Common myeloid progenitor, CD34-positive (primary cell): ENCODE measurements at regions of chr19 and their contacts with region 1.

Region 1: GRCh38 chr19:18475004-18475453 is 37.1 kb upstream of the ISYNA1 start:
- DNase-seq: no peak
- H3K4me3 ChIP-seq: no peak overlapping the region
- H3K27ac ChIP-seq: no peak overlapping the region
- H3K4me1 ChIP-seq: peaks cover 0 to 41% (median 16%) of the 10 kb centered on the region in 4 experiments
- H3K27me3 ChIP-seq: no peaks in the 10 kb centered on the region

Region 2: DNA sequence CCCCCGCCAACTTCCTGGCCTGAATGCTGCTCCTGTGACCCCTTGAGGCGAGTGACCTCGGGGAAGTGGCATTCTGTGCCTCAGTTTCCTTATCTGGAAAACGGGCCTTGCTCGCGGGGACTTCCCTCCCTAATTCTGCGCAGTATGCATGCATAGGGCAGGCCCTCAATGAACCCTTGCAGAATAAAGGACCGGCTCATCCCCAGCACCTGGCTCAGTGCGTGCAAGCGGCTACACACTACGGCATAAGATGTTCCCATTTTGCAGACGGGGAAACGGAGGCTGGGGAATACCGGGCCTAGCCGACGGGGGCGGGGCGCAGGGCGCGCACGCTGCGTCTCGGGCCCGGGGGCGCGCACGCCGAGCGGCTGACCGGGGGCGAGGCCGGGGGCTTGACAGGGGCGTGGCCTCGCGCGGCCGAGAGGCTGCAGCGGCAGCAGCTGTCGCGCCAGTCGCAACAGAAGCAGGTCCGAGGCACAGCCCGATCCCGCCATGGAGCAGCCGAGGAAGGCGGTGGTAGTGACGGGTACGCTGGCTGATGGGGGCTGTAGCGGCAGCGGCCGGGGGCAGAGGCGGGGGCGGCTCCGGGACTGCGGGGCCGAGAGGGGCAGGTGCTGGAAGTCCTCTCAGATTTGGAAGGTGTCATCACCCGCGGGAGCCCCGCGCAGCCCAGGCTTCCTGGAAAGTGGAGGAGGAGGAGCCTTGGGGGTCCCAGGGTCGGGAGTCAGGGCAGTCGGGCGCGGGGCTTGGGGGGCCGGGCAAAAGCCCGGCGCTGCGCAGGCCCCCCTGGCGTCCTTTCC is 134.6 kb before region 1 on chr19 and contains the start of gene PGPEP1:
- CTCF ChIA-PET with region 1: no interaction called
- POLR2A ChIA-PET with region 1: no interaction called
- DNase-seq: peak; percentile 30 to 67 (median 62)
- H3K4me3 ChIP-seq: peak within 1 kb of the TSS; percentile 75 to 92 (median 81)
- H3K27ac ChIP-seq: peak within 1 kb of the TSS; percentile 72 to 87
- H3K4me1 ChIP-seq: peaks cover 2 to 31% (median 22%) of the 10 kb centered on the region in 4 experiments
- H3K27me3 ChIP-seq: no peaks in the 10 kb centered on the region

Region 3: DNA sequence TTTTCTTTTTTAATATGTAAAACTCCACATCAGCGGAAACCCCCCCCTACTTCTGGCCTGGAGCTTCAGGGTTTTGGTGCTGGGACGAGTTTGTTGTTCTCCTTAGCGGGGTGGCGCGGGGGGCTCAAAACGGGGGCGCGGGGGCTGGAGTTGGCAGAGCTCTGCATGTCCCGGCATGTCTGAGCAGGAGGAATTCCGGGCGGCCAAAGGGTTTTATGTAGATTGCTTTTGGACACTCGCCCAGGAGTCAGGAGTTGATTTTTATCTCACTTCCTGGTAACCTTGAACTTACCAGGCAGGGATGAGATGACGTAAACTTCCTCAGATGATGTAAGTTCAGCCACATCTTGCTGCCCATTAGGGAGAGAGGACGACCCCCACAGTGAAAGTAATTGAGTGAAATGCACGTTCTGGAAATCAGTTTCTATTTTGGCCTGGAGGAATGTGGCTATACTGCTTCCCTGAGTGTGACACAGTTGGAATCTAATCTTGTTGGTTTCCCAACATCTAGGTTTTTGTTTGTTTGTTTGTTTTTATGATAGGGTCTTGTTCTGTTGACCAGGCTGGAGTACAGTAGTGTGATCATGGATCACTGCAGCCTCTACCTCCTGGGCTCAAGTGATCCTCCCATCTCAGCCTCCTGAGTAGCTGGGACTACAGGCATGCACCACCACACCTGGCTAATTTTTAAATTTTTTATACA is 110.1 kb before region 1 on chr19:
- CTCF ChIA-PET with region 1: no interaction called
- POLR2A ChIA-PET with region 1: no interaction called
- DNase-seq: peak; percentile 82 to 87 (median 85)
- H3K4me3 ChIP-seq: peak overlapping the region in 2 of 7 experiments; percentile 20 to 25
- H3K27ac ChIP-seq: peak overlapping the region in 1 of 2 experiments; percentile 73
- H3K4me1 ChIP-seq: peaks cover 5 to 29% (median 21%) of the 10 kb centered on the region in 4 experiments
- H3K27me3 ChIP-seq: no peaks in the 10 kb centered on the region

Region 4: DNA sequence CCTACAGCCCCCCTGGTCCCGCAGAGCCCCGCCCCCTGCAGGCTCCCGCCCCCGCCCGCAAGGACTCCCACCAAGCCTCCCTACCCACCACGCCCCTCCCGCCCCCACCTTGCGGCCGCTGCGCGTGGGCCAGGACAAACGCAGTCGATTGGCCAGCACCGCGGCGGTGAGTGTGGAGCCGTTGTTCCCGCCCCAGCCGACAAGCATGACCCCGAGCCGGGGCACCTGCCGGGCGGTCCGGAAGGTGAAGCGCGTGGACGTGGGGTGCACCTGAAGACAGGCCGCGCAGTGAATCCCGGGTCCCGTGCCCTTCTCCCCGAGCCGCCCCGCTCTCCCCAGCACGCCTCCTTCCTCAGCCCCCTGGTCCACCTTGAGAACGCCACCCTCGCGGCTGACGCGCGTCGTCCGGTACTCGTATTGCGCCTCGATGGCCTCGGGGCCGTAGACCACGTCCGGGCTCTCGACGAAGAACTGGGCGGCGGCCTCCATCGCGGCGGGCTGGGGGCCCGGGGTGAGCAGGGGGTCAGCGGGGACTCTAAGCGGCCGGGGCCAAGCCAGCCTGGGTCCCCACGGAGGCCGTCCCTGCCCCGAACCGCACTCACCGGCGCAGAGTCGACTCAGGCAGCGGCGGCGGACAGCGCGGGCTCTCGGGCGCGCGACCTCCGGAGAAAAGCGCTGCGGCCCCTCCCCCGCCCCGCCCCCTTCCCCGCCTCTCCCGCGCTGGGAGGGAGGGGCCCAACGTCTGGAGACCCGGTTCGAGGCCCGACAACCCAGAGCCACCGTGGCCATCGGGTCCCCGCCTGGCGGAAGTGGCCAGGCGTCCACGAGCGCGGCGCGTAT is 37.3 kb before region 1 on chr19 and contains the start of gene ISYNA1:
- CTCF ChIA-PET with region 1: no interaction called
- POLR2A ChIA-PET with region 1: no interaction called
- DNase-seq: peak in 2 of 3 donors; percentile 40 to 58
- H3K4me3 ChIP-seq: peak within 1 kb of the TSS; percentile 29 to 80 (median 69)
- H3K27ac ChIP-seq: peak within 1 kb of the TSS in 1 of 2 experiments; percentile 68
- H3K4me1 ChIP-seq: peaks cover 0 to 42% (median 27%) of the 10 kb centered on the region in 4 experiments
- H3K27me3 ChIP-seq: no peaks in the 10 kb centered on the region

Region 5: DNA sequence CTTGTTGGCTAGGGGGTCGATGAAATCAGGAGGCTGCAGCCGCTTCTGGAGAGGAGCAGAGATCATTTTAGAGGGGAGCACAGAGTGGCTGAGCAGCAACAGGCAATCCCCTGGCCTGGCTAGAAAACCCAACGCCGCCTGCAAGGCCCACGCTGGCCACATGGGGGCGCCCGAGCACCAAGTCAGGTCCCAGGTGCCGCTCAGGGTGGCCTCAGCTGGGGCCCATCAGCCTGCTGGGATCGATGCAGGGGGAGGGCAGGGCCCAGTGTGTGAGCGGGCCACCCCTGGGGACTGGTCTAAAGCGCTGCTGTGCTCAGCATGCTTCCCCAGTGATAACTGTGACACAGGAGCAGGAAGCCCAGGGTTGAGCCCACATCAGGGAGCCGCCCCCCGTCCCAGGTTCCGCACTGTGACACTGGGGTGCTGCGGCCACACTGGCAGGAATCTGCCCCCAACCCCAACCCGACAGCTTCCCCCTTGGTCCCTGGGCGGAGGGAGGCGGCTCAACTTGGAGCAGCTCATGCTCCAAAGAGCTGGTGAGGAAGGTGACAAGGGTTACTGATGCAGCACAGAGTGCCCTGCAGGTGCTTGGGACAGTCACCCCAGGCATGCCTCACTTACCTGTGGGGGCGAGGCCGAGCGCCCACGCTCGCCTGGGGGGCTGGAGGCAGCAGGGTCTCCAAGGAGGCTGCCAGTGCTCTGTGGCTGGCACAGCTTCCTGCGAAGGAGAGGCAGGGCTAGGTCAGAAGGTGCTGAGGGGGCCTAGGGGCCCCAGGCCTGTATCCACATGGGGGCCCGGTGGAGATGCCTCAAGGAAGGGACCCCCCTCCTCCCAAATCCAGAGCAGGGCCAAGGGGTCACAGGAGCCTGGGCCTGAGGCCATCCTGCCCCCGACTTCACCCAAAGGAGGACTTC is 23.8 kb before region 1 on chr19:
- CTCF ChIA-PET with region 1: interaction called, 18 read pairs
- POLR2A ChIA-PET with region 1: no interaction called
- DNase-seq: peak; percentile 62 to 78 (median 72)
- H3K4me3 ChIP-seq: no peak overlapping the region
- H3K27ac ChIP-seq: no peak overlapping the region
- H3K4me1 ChIP-seq: peaks cover 0 to 3% (median 0%) of the 10 kb centered on the region in 4 experiments
- H3K27me3 ChIP-seq: no peaks in the 10 kb centered on the region

Region 6: GRCh38 chr19:18456974-18457373 is 18.1 kb before region 1 on chr19:
- CTCF ChIA-PET with region 1: interaction called, 18 read pairs
- POLR2A ChIA-PET with region 1: no interaction called
- DNase-seq: no peak
- H3K4me3 ChIP-seq: no peak overlapping the region
- H3K27ac ChIP-seq: no peak overlapping the region
- H3K4me1 ChIP-seq: no peaks in the 10 kb centered on the region
- H3K27me3 ChIP-seq: no peaks in the 10 kb centered on the region

Region 7: GRCh38 chr19:18557474-18558201 is 82.6 kb after region 1 on chr19 and contains the start of gene KXD1:
- CTCF ChIA-PET with region 1: no interaction called
- POLR2A ChIA-PET with region 1: no interaction called
- DNase-seq: peak; percentile 100
- H3K4me3 ChIP-seq: peak within 1 kb of the TSS; percentile 55 to 97 (median 93)
- H3K27ac ChIP-seq: peak within 1 kb of the TSS; percentile 82 to 94
- H3K4me1 ChIP-seq: peaks cover 5 to 18% (median 11%) of the 10 kb centered on the region in 4 experiments
- H3K27me3 ChIP-seq: no peaks in the 10 kb centered on the region